Dorsolateral prefrontal cortex (tissue), 120 donors: ENCODE measurements at regions of chr7 and their contacts with region 1.

Region 1: DNA sequence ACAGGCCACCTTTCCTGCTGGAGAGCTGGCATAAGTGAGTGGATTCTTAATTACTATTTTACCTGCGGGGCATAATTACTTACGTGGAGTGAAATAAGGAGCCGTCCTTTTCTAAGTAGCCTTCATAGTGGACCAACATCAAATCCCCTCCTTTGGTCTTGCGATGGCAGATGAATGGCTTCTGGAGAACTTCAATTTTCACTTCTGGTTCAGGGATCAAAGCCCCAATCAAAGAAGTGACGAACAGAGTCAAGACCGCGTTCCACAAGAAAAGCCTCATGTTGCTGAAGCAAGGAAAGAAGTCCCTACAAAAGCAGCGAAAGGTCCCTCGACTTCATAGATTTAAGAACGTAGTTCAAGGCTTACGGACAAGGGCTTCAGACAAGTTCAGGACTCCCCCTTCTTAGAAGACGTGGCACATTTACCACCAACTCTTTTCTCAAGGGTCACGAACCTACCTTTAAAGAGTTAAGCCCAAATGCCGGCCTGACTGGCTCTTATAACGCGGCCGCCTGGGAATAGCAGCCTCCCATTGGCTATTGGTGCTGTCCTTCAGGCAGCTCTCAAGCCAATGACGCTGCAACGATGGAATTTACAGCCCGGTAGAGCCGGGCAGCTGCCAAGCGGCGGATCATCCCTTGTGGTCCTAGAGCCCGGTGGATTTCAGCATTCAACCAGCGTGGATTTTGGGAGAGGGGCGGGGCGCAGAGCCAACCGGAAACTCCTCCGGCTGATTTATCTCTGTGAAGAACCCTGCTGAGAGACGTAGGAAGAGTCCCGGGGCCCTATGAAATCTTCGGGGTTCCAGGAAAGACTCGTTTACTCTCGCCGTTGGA is at the start of gene FKBP14:
- DNase-seq: peak; percentile 91 to 99 (median 98)
- H3K4me3 ChIP-seq: peak within 1 kb of the TSS; percentile 67 to 99 (median 91)
- H3K27ac ChIP-seq: peak within 1 kb of the TSS; percentile 2 to 97 (median 87)
- H3K27me3 ChIP-seq: no peaks in the 10 kb centered on the region
- CTCF ChIP-seq: peak in 11 of 56 donors; percentile 3 to 35 (median 15)
- total RNA-seq, gene FKBP14: 7.0 to 20.9 (median 12.4) TPM

Region 2: GRCh38 chr7:29684787-29685650 is 341.4 kb before region 1 on chr7:
- intact Hi-C with region 1: loop called in 1 of 2 experiments (anchors 5 kb)
- DNase-seq: peak; percentile 37 to 80 (median 63)
- H3K4me3 ChIP-seq: peak overlapping the region; percentile 38 to 91 (median 78)
- H3K27ac ChIP-seq: peak overlapping the region in 58 of 59 donors; percentile 62 to 98 (median 92)
- H3K27me3 ChIP-seq: no peaks in the 10 kb centered on the region
- CTCF ChIP-seq: peak in 9 of 56 donors; percentile 5 to 29 (median 10)

Region 3: DNA sequence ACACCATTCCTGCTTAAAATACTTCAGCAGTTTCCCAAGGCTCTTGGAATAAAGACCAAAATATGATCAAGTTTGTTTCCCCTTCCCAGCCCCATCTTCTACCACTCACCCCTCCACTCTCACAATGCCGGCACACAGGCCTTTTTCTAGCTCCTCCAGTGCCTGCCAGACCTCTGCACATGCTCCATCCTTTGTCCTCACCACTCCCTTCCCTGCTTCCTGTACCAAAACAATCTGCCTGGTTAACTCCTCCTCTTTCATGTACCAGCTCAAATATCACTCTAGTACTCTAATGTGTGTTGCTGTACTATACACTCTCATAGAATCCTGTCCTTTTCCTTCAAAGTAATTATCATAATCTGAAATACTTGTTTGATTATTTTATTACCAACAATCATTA is 56.3 kb before region 1 on chr7:
- intact Hi-C with region 1: loop called in 1 of 2 experiments (anchors 5 kb)
- DNase-seq: no peak
- H3K4me3 ChIP-seq: peak overlapping the region in 13 of 59 donors; percentile 1 to 46 (median 22)
- H3K27ac ChIP-seq: peak overlapping the region in 55 of 59 donors; percentile 1 to 87 (median 70)
- H3K27me3 ChIP-seq: no peaks in the 10 kb centered on the region
- CTCF ChIP-seq: no peak

Region 4: DNA sequence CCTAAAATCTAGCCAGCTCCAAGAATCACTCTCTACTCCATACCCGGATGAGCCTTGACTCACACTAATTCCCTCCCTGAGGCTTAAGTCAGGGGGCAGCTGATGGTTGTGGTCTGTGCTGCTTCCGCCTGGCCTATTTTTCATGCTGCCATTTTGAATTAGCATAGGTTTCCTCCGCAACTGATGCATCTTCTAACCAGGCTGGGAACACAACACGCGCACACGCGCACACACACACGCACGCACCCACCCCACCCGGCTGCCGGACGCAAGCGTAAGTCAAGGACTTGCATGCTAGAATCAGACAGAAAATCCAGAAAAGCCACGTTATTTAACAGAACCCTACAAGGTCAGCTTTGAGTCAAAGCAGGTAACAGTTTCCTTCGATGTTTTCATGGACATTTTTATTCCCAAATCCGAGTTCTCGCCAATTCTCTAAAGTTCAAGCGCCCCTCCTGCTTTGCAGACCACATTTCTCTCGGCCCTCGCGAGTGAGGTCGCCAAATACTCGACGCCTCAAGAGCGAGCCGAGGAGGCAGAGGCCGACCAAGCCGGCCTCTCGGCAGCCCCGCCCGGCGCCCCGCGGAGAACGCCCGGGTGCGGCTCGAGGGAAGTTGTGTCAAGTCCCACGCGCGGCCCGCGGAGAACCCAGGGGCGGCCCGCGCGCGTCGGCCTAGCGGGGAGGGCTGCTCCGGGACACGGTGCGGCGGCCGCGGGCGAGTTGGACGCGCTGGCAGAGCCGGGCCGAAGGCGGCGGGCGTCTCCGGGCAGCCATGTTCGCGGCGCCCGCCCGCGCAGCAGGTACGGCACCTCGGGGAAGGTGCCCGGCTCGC is 37.8 kb before region 1 on chr7:
- intact Hi-C with region 1: loop called (anchors 1 to 2 kb)
- DNase-seq: peak in 8 of 10 donors; percentile 39 to 72 (median 62)
- H3K4me3 ChIP-seq: peak overlapping the region; percentile 74 to 99 (median 95)
- H3K27ac ChIP-seq: peak overlapping the region; percentile 87 to 100 (median 97)
- H3K27me3 ChIP-seq: no peaks in the 10 kb centered on the region
- CTCF ChIP-seq: no peak

Region 5: DNA sequence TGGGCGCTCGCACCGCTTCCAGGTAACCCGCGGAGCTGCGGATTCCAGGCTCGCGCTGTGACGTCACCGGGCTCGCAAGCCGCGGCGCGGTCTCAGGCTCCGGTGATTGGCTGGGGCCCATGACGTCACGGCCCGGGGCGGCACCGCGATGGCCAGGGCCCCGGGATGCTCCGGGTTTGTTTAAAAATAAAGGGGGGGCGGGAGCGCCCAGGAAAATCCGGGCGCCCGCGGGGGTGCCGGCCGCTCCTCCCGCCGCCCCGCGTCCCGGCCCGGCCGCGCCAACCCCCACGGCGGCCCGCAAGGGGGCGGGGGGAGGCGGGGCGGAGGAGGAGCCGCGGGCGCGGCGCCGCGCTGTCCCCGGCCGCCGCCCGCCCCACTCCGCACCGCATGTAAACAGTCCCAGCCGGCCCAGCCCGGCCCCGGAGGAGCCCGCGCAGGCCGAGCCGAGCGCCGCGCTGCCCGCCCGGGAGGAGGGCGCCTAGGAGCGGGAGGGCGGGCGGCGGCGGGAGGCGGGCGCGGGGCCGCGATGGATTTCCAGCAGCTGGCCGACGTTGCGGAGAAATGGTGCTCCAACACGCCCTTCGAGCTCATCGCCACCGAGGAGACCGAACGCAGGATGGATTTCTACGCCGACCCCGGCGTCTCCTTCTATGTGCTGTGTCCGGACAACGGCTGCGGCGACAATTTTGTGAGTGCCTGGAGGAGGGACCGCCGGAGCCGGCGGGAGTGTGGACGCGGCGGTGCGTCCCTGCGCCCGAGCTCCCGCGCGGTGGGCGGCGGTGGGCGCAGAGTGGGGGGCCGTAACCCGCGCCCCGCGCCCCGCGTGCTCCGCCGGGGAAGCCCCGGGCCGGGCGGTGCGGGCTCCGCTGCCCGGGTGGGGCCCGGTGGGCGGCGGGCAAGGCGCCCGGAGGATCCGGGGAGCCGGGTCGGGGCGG is 108.4 kb after region 1 on chr7 and contains the start of gene MTURN:
- intact Hi-C with region 1: loop called (anchors 5 to 10 kb)
- DNase-seq: peak; percentile 88 to 95 (median 92)
- H3K4me3 ChIP-seq: peak within 1 kb of the TSS; percentile 73 to 99 (median 96)
- H3K27ac ChIP-seq: peak within 1 kb of the TSS; percentile 87 to 100 (median 97)
- H3K27me3 ChIP-seq: no peaks in the 10 kb centered on the region
- CTCF ChIP-seq: peak in 1 of 56 donors; percentile 15
- total RNA-seq, gene MTURN: 338 to 1,341 (median 633) TPM

Region 6: GRCh38 chr7:30348083-30348560 is 321.7 kb after region 1 on chr7:
- intact Hi-C with region 1: no loop called
- DNase-seq: no peak
- H3K4me3 ChIP-seq: no peak overlapping the region
- H3K27ac ChIP-seq: no peak overlapping the region
- H3K27me3 ChIP-seq: no peaks in the 10 kb centered on the region
- CTCF ChIP-seq: no peak